AG04449 (cell line): ENCODE measurements at regions of chr7 and their contacts with region 1.

Region 1: GRCh38 chr7:22103255-22103969 is 157.7 kb upstream of the CDCA7L start:
- DNase-seq: no peak
- H3K4me3 ChIP-seq: no peak overlapping the region
- CTCF ChIP-seq: peak; percentile 61

Region 2: GRCh38 chr7:22082886-22083703 is 20.3 kb before region 1 on chr7:
- CTCF ChIA-PET with region 1: interaction called, 153 read pairs
- POLR2A ChIA-PET with region 1: no interaction called
- DNase-seq: no peak
- H3K4me3 ChIP-seq: peak overlapping the region; percentile 75
- CTCF ChIP-seq: peak; percentile 98

Region 3: DNA sequence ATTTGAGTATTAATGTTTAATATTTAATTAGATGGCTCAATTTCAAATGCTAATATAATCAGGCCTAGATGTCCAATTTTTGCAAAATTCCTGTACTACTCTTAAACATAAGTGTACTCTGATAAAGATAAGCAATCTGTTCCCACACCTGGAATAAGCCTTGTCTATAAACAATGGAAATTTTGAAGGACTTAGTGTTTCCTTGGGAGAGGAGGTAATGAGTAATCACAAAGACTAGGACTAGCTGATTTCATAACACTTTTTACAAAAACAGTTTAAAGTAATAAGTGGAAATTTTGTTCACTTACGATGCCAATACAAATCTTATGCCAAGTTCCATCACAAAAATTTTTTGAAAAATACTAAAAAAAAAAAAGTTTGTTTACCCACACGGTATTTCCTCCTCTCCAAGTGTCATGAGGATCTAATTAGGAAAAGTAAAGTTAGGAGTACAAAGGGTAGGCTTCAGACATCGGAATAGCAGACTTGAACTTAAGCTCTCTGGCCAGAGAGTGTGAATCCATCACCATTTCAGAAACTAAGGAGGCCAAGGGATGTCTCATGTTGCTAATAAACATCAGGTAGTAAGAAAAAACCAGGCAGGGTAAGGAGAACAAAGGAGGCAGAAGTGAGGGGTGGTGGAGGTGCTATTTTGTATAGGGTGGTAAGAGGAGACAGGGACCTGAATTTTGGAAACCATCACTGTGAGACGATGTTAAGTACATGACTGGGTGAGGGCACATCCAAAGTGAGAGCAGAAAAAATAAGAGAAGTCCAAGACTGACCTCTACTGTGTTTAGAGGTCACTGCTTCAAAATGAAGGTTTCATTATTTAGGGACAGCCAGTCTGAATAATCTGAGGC is 192.2 kb after region 1 on chr7:
- CTCF ChIA-PET with region 1: interaction called, 185 read pairs
- POLR2A ChIA-PET with region 1: no interaction called
- DNase-seq: no peak
- H3K4me3 ChIP-seq: no peak overlapping the region
- CTCF ChIP-seq: no peak

Region 4: DNA sequence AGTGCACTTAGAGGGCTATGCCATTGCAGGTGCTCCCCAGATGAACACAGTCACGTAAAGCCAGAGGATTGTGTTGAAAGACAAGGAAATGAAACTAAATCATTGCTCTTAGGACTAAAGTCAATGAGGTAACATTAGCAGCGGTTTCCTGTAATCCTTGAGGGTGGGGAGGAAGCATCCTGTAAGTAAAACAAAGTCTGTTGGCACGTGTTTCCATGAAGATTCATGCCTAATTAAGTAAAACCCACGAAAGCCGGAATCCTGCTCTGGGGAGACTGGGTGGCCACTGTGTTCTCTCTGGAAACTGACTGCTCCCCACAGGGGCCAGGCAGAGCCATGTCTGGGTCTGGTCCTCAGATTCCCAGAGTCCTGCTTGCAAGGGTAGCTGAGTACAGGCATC is 378.3 kb after region 1 on chr7:
- CTCF ChIA-PET with region 1: interaction called, 232 read pairs
- POLR2A ChIA-PET with region 1: no interaction called
- DNase-seq: peak; percentile 37
- H3K4me3 ChIP-seq: no peak overlapping the region
- CTCF ChIP-seq: no peak

Region 5: DNA sequence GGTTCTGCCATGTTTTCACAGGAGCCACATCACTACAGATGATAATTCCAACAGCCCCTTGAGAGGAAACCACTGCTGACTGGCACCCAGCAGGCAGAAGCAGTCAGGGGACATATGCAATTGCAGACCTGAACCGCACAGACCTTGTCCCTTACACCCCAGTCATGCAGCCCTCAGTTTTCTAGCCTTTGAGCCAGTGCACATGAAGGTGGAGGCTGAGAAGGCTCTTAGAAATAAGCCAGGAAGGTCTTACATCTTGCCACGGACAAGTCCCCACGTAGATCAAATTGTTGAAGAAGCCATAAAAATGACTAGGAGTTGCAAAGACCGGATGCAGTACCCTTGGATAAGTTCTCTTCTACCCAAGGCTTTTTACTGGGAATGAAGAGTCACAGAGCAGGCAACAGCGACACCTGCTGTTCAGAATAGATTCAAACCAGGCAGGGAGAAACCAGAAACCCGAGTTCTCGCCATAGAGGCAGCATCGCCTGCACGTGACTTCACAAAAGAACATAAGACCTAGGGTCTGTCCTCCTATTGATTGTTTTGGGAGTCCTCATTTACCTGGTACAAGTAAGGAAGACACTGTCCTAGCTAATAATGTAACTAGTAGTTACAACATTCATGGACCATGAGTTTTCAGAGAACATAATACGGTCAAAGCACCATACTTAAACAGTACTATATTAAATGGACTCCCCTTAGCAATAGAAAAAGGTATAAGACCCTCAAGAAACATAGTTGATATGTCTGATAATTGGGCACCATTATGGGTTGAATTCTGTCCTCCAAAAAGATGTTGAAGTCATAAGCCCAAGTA is 385.4 kb after region 1 on chr7:
- CTCF ChIA-PET with region 1: interaction called, 232 read pairs
- POLR2A ChIA-PET with region 1: no interaction called
- DNase-seq: peak; percentile 26
- H3K4me3 ChIP-seq: no peak overlapping the region
- CTCF ChIP-seq: peak; percentile 65

Region 6: GRCh38 chr7:22499044-22499443 is 395.6 kb after region 1 on chr7:
- CTCF ChIA-PET with region 1: interaction called, 67 read pairs
- POLR2A ChIA-PET with region 1: no interaction called
- DNase-seq: no peak
- H3K4me3 ChIP-seq: no peak overlapping the region
- CTCF ChIP-seq: no peak